WTC11 (cell line): ENCODE measurements at regions of chr20 and their contacts with region 1.

Region 1: GRCh38 chr20:38221119-38221589 is 39.4 kb downstream of the KIAA1755 start:
- DNase-seq: peak; percentile 95
- ATAC-seq: peak; percentile 95
- H3K4me3 Mint-ChIP-seq: no peak overlapping the region
- H3K27ac Mint-ChIP-seq: no peak overlapping the region
- H3K4me1 Mint-ChIP-seq: peaks cover 2% of the 10 kb centered on the region; the same call in 1 of the 2 replicates
- H3K27me3 Mint-ChIP-seq: no peaks in the 10 kb centered on the region; the same call in 1 of the 2 replicates
- CTCF ChIP-seq: peak; percentile 79

Region 2: DNA sequence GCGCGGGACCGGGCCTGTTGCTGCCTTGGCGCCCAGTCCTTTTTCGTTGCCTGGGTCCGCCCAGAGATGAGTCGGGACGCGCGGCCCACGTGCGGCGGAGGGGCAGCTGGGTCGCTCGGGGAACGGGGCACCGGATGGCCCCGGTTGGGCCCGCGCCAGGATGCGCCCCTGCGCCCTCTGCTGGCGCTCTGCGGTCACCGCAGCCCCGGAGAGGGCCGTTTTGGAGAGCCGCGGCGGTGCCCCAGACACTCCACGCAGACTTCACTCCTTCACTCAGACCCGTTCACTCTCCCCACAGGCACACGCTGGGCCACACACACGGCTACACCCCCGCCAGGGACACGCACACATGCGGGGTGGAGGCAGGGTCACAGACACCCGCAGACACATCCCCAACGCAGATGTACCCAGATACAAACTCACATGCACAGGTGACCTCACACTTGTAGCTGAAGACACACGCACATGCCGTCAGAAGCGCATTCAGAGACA is 836.4 kb before region 1 on chr20:
- CTCF ChIA-PET with region 1: no interaction called
- POLR2A ChIA-PET with region 1: no interaction called
- DNase-seq: peak; percentile 82
- ATAC-seq: peak; percentile 79
- H3K4me3 Mint-ChIP-seq: peak overlapping the region; percentile 72
- H3K27ac Mint-ChIP-seq: peak overlapping the region; percentile 68
- H3K4me1 Mint-ChIP-seq: peaks cover 4% of the 10 kb centered on the region
- H3K27me3 Mint-ChIP-seq: no peaks in the 10 kb centered on the region
- CTCF ChIP-seq: peak; percentile 97

Region 3: GRCh38 chr20:38113401-38114325 is 107.5 kb before region 1 on chr20:
- CTCF ChIA-PET with region 1: interaction called, 45 read pairs
- POLR2A ChIA-PET with region 1: no interaction called
- DNase-seq: peak; percentile 81
- ATAC-seq: peak; percentile 98
- H3K4me3 Mint-ChIP-seq: no peak overlapping the region
- H3K27ac Mint-ChIP-seq: no peak overlapping the region
- H3K4me1 Mint-ChIP-seq: peaks cover 3% of the 10 kb centered on the region; the same call in 1 of the 2 replicates
- H3K27me3 Mint-ChIP-seq: no peaks in the 10 kb centered on the region
- CTCF ChIP-seq: no peak; the same call in 1 of the 2 replicates

Region 4: DNA sequence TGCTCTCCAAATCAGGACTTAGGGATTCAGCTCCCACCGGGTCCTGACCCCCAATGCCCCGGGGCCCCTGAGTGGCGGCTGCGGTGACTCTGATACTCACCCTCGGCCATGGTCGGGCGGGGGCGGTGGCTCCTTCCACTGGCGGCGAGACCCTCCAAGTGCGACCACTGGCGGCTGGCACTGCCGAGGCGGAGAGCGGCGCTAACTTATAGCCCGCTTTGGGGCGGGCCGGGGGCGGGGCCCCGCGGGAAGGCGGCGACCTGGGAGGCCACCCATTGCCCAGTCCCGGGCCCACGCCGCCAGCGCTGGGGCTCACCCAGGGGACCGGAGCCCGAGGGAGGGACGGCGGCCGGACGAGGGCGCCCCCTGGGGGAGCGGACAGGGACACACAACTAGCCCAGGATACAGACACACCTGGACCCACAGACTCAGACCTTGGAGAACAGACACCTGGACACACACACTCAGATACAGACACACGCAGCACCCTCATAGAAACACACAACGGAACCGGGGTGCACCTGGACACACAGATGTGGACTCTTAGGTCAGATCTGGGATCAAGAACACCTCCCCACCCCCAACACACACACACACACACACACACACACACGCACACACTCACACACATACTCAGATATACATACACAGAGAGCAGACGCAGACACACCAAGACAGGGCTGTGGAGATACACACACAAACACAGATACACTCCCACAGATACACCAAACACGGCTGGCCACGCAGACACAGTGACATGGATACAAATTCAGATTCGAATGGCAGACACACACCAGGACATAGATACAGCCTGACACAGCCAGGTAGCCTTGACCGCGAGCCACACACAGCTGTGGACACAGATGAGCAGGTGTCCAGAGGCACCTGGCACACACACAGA is 55.8 kb before region 1 on chr20 and contains the start of gene TGM2:
- CTCF ChIA-PET with region 1: interaction called, 15 read pairs
- POLR2A ChIA-PET with region 1: no interaction called
- DNase-seq: peak; percentile 63
- ATAC-seq: peak; percentile 89
- H3K4me3 Mint-ChIP-seq: peak within 1 kb of the TSS; percentile 48
- H3K27ac Mint-ChIP-seq: no peak within 1 kb of the TSS
- H3K4me1 Mint-ChIP-seq: 0 out of 2 replicates have a peak, but pooled peaks cover 4% of the 10 kb centered on the region
- H3K27me3 Mint-ChIP-seq: no peaks in the 10 kb centered on the region
- CTCF ChIP-seq: peak; percentile 76
- total RNA-seq, gene TGM2: 1.5 to 2.1 TPM (median 1.8 TPM) in 3 replicates

Region 5: GRCh38 chr20:38187512-38187911 is 33.6 kb before region 1 on chr20:
- CTCF ChIA-PET with region 1: interaction called, 14 read pairs
- POLR2A ChIA-PET with region 1: no interaction called
- DNase-seq: peak; percentile 47
- ATAC-seq: peak; percentile 88
- H3K4me3 Mint-ChIP-seq: no peak overlapping the region
- H3K27ac Mint-ChIP-seq: no peak overlapping the region
- H3K4me1 Mint-ChIP-seq: 0 out of 2 replicates have a peak, but pooled peaks cover 3% of the 10 kb centered on the region
- H3K27me3 Mint-ChIP-seq: no peaks in the 10 kb centered on the region; the same call in 1 of the 2 replicates
- CTCF ChIP-seq: no peak

Region 6: GRCh38 chr20:38321959-38322598 is 100.9 kb after region 1 on chr20:
- CTCF ChIA-PET with region 1: interaction called, 14 read pairs
- POLR2A ChIA-PET with region 1: no interaction called
- DNase-seq: peak; percentile 35
- ATAC-seq: peak; percentile 62
- H3K4me3 Mint-ChIP-seq: no peak overlapping the region
- H3K27ac Mint-ChIP-seq: no peak overlapping the region
- H3K4me1 Mint-ChIP-seq: no peaks in the 10 kb centered on the region
- H3K27me3 Mint-ChIP-seq: peaks cover 2% of the 10 kb centered on the region; the same call in 1 of the 2 replicates
- CTCF ChIP-seq: peak; percentile 45